GM13976 (cell line): ENCODE measurements at regions of chr7 and their contacts with region 1.

Region 1: GRCh38 chr7:2354186-2354938 is at the start of gene EIF3B:
- DNase-seq: peak; percentile 96
- CTCF ChIP-seq: no peak

Region 2: GRCh38 chr7:2104107-2104710 is 250.2 kb before region 1 on chr7:
- in situ Hi-C with region 1: no loop called
- DNase-seq: peak; percentile 89
- CTCF ChIP-seq: peak; percentile 40

Region 3: DNA sequence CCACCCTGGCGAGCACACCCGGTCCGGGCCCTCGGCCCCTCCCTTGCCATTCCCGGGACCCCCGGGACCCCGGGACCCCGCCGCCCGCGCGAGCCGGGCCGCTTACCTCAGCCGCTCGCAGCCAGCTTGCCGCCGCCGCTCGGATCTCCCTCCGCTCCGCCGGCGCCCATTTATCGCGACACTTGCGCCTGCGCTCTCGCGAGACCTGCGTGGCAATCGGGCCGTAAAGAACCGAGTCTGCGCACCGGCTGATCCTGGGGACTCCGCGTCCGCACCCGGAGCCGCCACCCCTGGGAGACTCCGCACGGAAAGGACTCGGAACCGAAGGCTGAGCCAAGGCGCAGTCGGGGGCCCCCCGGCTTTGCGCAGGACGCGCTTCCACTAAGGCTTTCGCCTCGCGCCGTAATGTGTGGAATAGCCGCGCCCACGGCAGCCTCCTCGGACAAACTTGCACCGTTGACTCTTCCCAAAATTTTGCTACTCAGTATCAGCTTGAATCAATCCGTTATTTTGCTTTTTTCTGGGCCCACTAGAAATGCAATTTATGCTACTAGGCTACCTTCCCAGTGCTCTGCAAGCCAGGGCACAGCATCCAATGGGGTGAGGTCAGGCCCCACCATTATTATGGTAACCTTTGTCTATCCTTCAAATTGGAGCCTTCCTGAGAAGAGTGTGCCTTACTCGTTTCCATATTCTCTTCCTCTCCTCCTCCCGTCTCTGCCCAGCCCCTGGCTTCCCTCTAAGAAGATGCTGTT is 121.4 kb before region 1 on chr7 and contains the start of gene MAD1L1:
- in situ Hi-C with region 1: loop called (anchors 10 kb)
- DNase-seq: peak; percentile 94
- CTCF ChIP-seq: no peak